H1 (cell line): ENCODE measurements at regions of chr6 and their contacts with region 1.

Region 1: DNA sequence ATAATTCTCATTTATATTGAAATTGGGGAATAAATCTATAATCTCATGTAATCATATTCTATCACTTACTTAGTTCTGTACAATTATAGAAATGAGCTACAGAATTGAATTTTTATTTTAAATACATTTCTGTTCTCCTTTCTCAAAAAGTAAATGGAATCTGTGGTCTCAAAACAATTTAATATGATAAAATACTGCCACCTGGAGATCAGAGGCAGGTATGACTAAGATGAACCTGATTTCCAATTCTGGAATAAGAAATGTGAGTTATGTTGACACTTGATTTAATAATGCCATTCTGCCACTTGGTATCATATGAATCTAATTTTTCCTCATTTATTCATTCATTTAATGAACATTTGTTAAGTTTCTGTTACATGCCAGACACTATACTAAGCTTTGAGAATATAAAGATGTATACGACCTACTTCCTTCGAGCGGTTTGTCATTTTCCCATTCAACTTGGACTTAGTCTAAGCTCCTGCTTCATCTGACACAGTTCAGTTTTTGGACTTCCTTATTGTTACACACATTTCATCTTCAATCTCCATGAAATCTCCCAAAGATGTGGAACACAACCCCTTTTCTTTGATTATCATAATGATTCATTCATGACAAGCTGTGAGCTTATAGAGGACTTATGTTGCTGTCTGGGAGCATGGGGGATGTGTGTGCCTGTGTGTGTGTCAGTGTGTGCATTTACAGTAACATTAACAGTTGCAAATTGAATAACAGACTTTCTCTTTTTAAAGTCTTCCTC is 7.5 kb upstream of the CCDC28A start:
- DNase-seq: no peak
- H3K4me3 ChIP-seq: no peak overlapping the region
- H3K27ac ChIP-seq: no peak overlapping the region
- H3K4me1 ChIP-seq: no peaks in the 10 kb centered on the region
- H3K27me3 ChIP-seq: no peaks in the 10 kb centered on the region
- CTCF ChIP-seq: peak in 2 of 3 experiments; percentile 25 to 43; a peak in 2 of 4 replicates
- EP300 ChIP-seq: no peak
- POLR2A ChIP-seq: no peak
- RAD21 ChIP-seq: peak; percentile 55 to 68

Region 2: GRCh38 chr6:138692058-138692977 is 73.8 kb before region 1 on chr6:
- CTCF ChIA-PET with region 1: interaction called, 15 read pairs
- POLR2A ChIA-PET with region 1: no interaction called
- DNase-seq: peak in 1 of 2 experiments; percentile 87
- H3K4me3 ChIP-seq: peak overlapping the region; percentile 74 to 95 (median 83)
- H3K27ac ChIP-seq: peak overlapping the region; percentile 52; the same call in 1 of the 2 replicates
- H3K4me1 ChIP-seq: peaks cover 0 to 6% (median 2%) of the 10 kb centered on the region in 4 experiments; a peak in 4 of 7 replicates
- H3K27me3 ChIP-seq: peaks cover 0 to 3% (median 0%) of the 10 kb centered on the region in 4 experiments; a peak in 2 of 7 replicates
- CTCF ChIP-seq: peak; percentile 52 to 63 (median 62)
- EP300 ChIP-seq: no peak
- POLR2A ChIP-seq: no peak
- RAD21 ChIP-seq: peak; percentile 21 to 50; a peak in 3 of 4 replicates